Activated CD4-positive, alpha-beta T cell treated with anti-CD3 and anti-CD28 coated beads for 36 hours (primary cell): ENCODE measurements at regions of chr5 and their contacts with region 1.

Region 1: GRCh38 chr5:40679155-40679913 is 381 bp upstream of the PTGER4 start:
- DNase-seq: peak; percentile 97
- ATAC-seq: peak; percentile 59
- H3K4me3 Mint-ChIP-seq: peak overlapping the region; percentile 93
- H3K27ac Mint-ChIP-seq: peak overlapping the region; percentile 97
- H3K4me1 Mint-ChIP-seq: peaks cover 38% of the 10 kb centered on the region
- H3K27me3 Mint-ChIP-seq: no peaks in the 10 kb centered on the region

Region 2: DNA sequence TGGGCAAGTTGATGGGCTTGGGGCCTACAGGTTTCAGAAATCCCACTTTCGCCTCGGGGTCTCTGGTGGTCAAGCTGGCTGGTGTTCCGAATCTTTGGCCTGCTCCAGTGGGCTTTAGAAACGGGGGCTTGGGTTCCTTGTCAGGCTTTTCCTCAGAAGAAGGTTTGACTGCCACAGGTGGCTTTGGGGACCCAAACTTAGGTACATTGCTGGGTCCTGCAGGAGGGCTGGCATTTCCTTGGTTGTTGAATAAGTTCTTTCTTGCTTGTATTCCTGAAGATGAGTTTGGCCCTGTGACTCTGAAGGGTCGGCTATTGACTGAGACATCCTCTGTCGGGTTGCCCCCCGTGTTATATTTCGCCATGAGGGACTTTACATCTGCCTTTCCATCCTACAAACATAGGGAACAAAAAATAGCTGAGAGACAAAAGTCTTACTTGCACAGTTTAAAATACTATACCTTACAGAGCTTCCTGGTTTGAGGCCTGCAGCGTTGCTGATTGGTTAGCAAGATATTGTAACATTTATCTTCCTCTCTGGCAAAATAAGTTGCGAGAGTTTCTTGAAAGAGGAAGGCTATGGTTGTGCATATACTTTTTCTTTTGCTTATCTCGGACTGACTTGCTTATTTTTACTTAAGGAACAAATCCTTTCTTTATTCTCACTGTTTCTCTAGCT is 1476.6 kb before region 1 on chr5:
- CTCF ChIA-PET with region 1: no interaction called
- POLR2A ChIA-PET with region 1: no interaction called
- intact Hi-C with region 1: loop called (anchors 5 to 10 kb)
- DNase-seq: peak; percentile 62
- ATAC-seq: peak; percentile 27
- H3K4me3 Mint-ChIP-seq: peak overlapping the region; percentile 81
- H3K27ac Mint-ChIP-seq: peak overlapping the region; percentile 93
- H3K4me1 Mint-ChIP-seq: peaks cover 36% of the 10 kb centered on the region
- H3K27me3 Mint-ChIP-seq: no peaks in the 10 kb centered on the region

Region 3: GRCh38 chr5:40223884-40224402 is 455.4 kb before region 1 on chr5:
- CTCF ChIA-PET with region 1: interaction called, 4 read pairs
- POLR2A ChIA-PET with region 1: no interaction called
- intact Hi-C with region 1: loop called in 1 of 2 experiments (anchors 1 kb)
- DNase-seq: peak; percentile 63
- ATAC-seq: peak; percentile 87
- H3K4me3 Mint-ChIP-seq: peak overlapping the region; percentile 50
- H3K27ac Mint-ChIP-seq: peak overlapping the region; percentile 94
- H3K4me1 Mint-ChIP-seq: peaks cover 64% of the 10 kb centered on the region
- H3K27me3 Mint-ChIP-seq: no peaks in the 10 kb centered on the region

Region 4: DNA sequence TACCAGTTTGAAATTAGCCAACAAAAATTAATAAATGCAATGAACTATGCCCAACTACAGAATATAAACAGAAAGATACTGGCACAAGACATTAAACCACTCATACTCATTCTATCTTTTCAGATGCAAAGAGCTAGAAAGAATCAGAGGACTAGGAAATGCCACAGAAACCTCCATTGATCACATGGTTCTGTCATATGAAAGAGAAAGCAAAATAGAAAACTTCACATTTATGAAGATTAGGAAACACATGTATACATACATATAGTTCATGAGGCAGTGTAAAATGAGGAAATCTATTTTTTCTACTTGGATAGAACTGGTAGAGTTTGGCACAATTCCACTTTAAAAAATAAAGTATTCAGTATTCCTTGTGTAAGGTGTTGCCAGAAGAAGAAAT is 274.7 kb before region 1 on chr5:
- CTCF ChIA-PET with region 1: interaction called, 5 read pairs
- POLR2A ChIA-PET with region 1: interaction called, 8 read pairs
- intact Hi-C with region 1: loop called in 1 of 2 experiments (anchors 1 kb)
- DNase-seq: no peak
- ATAC-seq: peak; percentile 28
- H3K4me3 Mint-ChIP-seq: peak overlapping the region; percentile 18
- H3K27ac Mint-ChIP-seq: peak overlapping the region; percentile 99
- H3K4me1 Mint-ChIP-seq: peaks cover 94% of the 10 kb centered on the region
- H3K27me3 Mint-ChIP-seq: no peaks in the 10 kb centered on the region

Region 5: GRCh38 chr5:40437452-40437861 is 241.9 kb before region 1 on chr5:
- CTCF ChIA-PET with region 1: interaction called, 4 read pairs
- POLR2A ChIA-PET with region 1: interaction called, 3 read pairs
- intact Hi-C with region 1: loop called (anchors 2 kb)
- DNase-seq: peak; percentile 55
- ATAC-seq: peak; percentile 61
- H3K4me3 Mint-ChIP-seq: no peak overlapping the region
- H3K27ac Mint-ChIP-seq: peak overlapping the region; percentile 61
- H3K4me1 Mint-ChIP-seq: peaks cover 80% of the 10 kb centered on the region
- H3K27me3 Mint-ChIP-seq: no peaks in the 10 kb centered on the region

Region 6: DNA sequence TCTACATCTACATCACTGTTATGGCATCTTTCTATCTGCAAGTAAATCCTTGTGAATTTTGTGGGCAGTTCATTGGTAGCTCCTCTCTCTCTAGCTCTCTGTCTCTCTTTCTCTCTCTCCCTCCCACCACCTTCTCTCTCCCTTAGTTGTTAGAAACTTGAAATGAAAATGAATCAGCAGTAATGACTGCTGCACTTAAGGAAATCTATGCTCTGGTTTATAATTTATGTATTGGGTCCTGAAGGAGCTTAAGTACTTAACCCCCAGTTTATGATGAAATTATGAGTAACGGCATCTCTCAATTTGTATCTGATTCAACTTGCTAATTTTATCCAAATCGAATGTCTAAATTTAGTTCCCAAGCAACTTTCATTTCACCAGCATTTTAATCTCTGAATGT is 51.6 kb before region 1 on chr5:
- CTCF ChIA-PET with region 1: interaction called, 5 read pairs
- POLR2A ChIA-PET with region 1: no interaction called
- intact Hi-C with region 1: loop called in 1 of 2 experiments (anchors 10 kb)
- DNase-seq: no peak
- ATAC-seq: peak; percentile 55
- H3K4me3 Mint-ChIP-seq: no peak overlapping the region
- H3K27ac Mint-ChIP-seq: no peak overlapping the region
- H3K4me1 Mint-ChIP-seq: peaks cover 37% of the 10 kb centered on the region
- H3K27me3 Mint-ChIP-seq: no peaks in the 10 kb centered on the region